Activated CD8-positive, alpha-beta T cell treated with anti-CD3 and anti-CD28 coated beads for 36 hours (primary cell): ENCODE measurements at regions of chr17 and their contacts with region 1.

Region 1: GRCh38 chr17:40622509-40622928 is 25.1 kb downstream of the SMARCE1 start:
- DNase-seq: peak; percentile 83
- ATAC-seq: peak; percentile 65
- H3K4me3 Mint-ChIP-seq: peak overlapping the region; percentile 20
- H3K27ac Mint-ChIP-seq: peak overlapping the region; percentile 37
- H3K4me1 Mint-ChIP-seq: peaks cover 68% of the 10 kb centered on the region
- H3K27me3 Mint-ChIP-seq: no peaks in the 10 kb centered on the region
- CTCF ChIP-seq: no peak

Region 2: GRCh38 chr17:40516581-40517285 is 105.8 kb before region 1 on chr17:
- CTCF ChIA-PET with region 1: no interaction called
- POLR2A ChIA-PET with region 1: no interaction called
- intact Hi-C with region 1: no loop called
- DNase-seq: peak; percentile 87
- ATAC-seq: peak; percentile 81
- H3K4me3 Mint-ChIP-seq: peak overlapping the region; percentile 66
- H3K27ac Mint-ChIP-seq: peak overlapping the region; percentile 89
- H3K4me1 Mint-ChIP-seq: peaks cover 60% of the 10 kb centered on the region
- H3K27me3 Mint-ChIP-seq: peaks cover 4% of the 10 kb centered on the region
- CTCF ChIP-seq: no peak

Region 3: DNA sequence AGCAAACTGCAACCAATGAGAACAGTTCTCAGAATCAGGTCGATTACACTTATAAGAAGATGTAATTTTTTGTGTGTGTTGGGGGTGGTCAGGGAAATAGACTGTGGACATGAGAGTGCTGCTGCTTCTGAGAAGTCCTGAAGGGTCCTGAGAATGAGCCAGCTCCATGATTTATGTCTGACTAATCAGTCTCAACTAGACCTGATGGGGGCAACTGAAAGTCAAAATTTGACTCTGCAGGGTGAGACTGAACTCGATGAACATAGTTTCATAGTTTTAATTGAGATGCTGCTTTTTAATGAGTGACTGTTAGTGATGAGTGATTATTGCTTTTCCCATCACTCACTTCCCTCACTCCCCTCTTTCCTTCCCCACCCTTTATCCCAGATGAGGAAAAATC is 12.2 kb before region 1 on chr17:
- CTCF ChIA-PET with region 1: interaction called, 23 read pairs
- POLR2A ChIA-PET with region 1: interaction called, 11 read pairs
- intact Hi-C with region 1: no loop called
- DNase-seq: peak; percentile 59
- ATAC-seq: peak; percentile 35
- H3K4me3 Mint-ChIP-seq: no peak overlapping the region
- H3K27ac Mint-ChIP-seq: peak overlapping the region; percentile 81
- H3K4me1 Mint-ChIP-seq: peaks cover 94% of the 10 kb centered on the region
- H3K27me3 Mint-ChIP-seq: no peaks in the 10 kb centered on the region
- CTCF ChIP-seq: no peak

Region 4: DNA sequence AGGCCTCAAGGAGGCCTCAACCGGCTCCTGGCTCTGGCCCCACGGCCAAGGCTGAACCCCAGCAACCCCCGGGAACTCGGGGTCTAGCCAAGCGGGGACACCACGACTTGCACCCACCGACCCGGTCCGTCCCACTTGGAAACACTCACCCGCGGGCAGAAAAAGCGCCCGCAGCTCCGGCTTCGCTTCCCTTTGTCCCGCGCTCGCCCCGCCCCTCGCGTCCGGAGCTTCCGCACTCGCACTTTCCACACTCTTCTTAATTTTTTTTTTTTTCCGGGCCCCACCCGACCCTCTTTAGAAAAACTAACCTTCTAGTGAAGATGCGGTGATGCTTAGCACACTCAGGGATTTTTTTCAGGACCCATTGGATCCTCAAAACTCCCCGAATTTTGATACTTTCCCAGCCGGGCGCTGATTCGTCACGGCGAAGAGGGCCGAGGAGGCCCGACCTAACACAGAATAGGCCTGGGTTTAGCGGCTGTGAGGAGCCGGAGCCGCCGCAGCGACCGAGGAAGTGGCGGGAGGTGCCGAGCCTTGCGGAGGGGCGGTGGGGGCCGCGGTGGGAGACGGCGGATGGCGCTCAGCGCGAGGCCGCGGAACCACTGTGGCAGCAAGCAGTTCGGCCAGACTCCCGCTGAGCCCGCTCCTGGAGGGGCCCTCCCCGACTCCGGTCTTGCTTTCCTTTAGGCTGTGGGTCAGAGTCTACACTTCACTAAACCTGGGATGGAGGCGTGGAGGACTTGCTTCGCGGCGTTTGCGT is 25.3 kb after region 1 on chr17 and contains the start of gene SMARCE1:
- CTCF ChIA-PET with region 1: interaction called, 15 read pairs
- POLR2A ChIA-PET with region 1: interaction called, 13 read pairs
- intact Hi-C with region 1: no loop called
- DNase-seq: peak; percentile 70
- ATAC-seq: peak; percentile 74
- H3K4me3 Mint-ChIP-seq: peak within 1 kb of the TSS; percentile 81
- H3K27ac Mint-ChIP-seq: peak within 1 kb of the TSS; percentile 92
- H3K4me1 Mint-ChIP-seq: peaks cover 38% of the 10 kb centered on the region
- H3K27me3 Mint-ChIP-seq: no peaks in the 10 kb centered on the region
- CTCF ChIP-seq: no peak
- total RNA-seq, gene SMARCE1: 87.8 to 92.5 TPM

Region 5: DNA sequence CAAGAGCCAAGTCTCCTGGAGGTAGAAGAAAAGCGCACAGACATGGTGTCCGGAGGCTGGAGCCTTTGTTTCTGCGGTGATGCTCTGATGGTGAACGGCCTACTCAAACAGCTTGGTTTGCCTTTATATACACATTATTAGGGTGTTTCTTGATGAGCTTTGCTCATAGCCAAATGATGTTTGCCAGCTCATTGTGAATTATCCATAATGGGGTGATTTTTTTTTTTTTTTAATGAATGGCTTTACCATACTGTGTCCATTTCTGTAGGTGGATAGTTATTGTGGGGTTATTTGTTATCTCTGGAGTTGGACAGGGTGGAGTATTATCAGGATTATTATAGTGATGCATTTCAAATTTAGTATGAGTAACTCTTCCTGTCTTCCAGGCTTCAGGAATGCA is 159.9 kb after region 1 on chr17 and contains the start of gene KRT27:
- CTCF ChIA-PET with region 1: no interaction called
- POLR2A ChIA-PET with region 1: no interaction called
- intact Hi-C with region 1: loop called (anchors 10 kb)
- DNase-seq: no peak
- ATAC-seq: no peak
- H3K4me3 Mint-ChIP-seq: no peak within 1 kb of the TSS
- H3K27ac Mint-ChIP-seq: no peak within 1 kb of the TSS
- H3K4me1 Mint-ChIP-seq: no peaks in the 10 kb centered on the region
- H3K27me3 Mint-ChIP-seq: peaks cover 29% of the 10 kb centered on the region
- CTCF ChIP-seq: no peak
- total RNA-seq, gene KRT27: not detected